ENCODE measurements at regions of chr4 and their contacts with region 1.

Region 1: DNA sequence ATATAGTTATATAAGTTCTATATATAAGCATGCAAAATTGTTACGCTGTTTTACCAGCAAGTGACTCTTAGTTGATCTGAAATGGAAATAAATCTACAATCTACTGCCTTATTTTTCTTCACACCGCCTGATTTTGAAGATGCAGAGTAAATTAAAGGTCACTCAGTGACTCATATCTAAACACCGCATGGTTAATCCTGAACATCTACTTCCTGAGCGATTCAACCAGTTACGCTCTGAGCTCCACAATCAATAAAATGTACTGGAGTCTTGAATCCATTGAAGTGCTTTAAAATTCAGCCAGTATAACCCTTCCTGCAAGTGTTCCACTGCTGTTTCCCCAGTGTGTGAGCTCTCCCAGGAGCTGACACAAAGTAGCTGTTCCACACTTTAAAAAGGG is 192.8 kb downstream of the SLC7A11 start:
- DNase-seq: no peak
- H3K4me3 ChIP-seq: no peak overlapping the region
- H3K27ac ChIP-seq: no peak overlapping the region
- H3K4me1 ChIP-seq: no peaks in the 10 kb centered on the region
- H3K27me3 ChIP-seq: no peaks in the 10 kb centered on the region
- CTCF ChIP-seq: no peak
- POLR2A ChIP-seq: no peak

Region 2: DNA sequence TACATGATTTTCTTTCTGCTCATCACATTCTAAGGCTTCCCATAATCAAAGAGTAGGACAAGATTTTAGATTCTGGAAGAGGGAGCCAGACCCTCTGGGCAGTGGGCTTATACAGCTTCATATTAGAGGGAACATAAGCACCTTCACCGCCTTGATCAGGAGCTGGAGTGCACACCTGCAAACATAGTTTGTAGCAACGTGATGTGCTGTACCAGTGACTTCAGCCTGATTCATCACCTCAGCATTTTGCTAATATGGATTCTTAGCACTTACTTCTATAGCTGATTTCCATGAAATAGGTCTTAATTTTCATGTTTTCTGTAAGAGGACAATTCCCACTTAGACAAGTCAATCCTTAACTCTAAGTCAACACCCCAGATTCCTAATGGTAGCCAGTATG is 553.8 kb before region 1 on chr4:
- intact Hi-C with region 1: no loop called
- DNase-seq: no peak
- H3K4me3 ChIP-seq: no peak overlapping the region
- H3K27ac ChIP-seq: no peak overlapping the region
- H3K4me1 ChIP-seq: no peaks in the 10 kb centered on the region
- H3K27me3 ChIP-seq: no peaks in the 10 kb centered on the region
- CTCF ChIP-seq: no peak
- POLR2A ChIP-seq: no peak

Region 3: GRCh38 chr4:138174981-138175794 is 125.8 kb after region 1 on chr4:
- intact Hi-C with region 1: loop called in 1 of 2 experiments (anchors 10 kb)
- DNase-seq: no peak
- H3K4me3 ChIP-seq: no peak overlapping the region
- H3K27ac ChIP-seq: no peak overlapping the region
- H3K4me1 ChIP-seq: no peaks in the 10 kb centered on the region
- H3K27me3 ChIP-seq: no peaks in the 10 kb centered on the region
- CTCF ChIP-seq: peak in 1 of 6 experiments; percentile 10
- POLR2A ChIP-seq: no peak